CD8-positive, alpha-beta T cell (primary cell): ENCODE measurements at regions of chr17 and their contacts with region 1.

Region 1: GRCh38 chr17:6913608-6914443 is 82.0 kb upstream of the ALOX12 start:
- DNase-seq: peak; percentile 65 to 85 (median 81)
- ATAC-seq: peak; percentile 91
- H3K4me3 ChIP-seq: peak overlapping the region; percentile 23 to 70
- H3K4me3 Mint-ChIP-seq: peak overlapping the region; percentile 89
- H3K27ac ChIP-seq: no peak overlapping the region
- H3K27ac Mint-ChIP-seq: no peak overlapping the region
- H3K4me1 ChIP-seq: peaks cover 5% of the 10 kb centered on the region
- H3K4me1 Mint-ChIP-seq: peaks cover 18% of the 10 kb centered on the region
- H3K27me3 ChIP-seq: no peaks in the 10 kb centered on the region
- H3K27me3 Mint-ChIP-seq: peaks cover 2% of the 10 kb centered on the region
- CTCF ChIP-seq: peak; percentile 91

Region 2: DNA sequence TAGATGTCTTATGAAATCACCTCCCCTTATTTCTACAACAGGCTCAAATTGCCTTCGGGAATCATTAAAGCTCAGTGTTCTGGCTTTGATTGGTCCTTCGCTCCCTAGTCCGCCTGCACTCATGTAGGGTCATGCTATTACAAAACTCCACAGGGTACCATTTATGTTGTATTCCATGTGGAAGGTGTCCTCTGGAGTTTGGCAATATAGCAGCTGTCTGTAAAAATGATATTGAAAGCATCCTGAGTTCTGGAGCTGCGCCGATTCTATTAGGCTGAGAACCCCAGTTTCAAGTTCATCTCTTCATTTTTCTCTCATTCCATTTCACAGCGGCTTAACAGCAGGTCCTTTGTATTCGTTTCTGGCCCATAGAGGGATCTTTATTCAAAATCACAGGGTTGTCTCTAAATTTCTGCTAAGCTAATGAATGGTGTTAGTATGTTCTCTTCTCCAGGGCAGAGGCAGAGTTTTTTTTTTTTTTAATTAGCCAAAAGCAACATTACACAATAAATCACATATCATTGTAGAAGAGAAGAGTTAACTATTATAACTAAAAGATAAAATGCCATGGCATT is 10.4 kb before region 1 on chr17:
- CTCF ChIA-PET with region 1: interaction called, 14 read pairs
- POLR2A ChIA-PET with region 1: no interaction called
- intact Hi-C with region 1: no loop called
- DNase-seq: no peak
- ATAC-seq: no peak
- H3K4me3 ChIP-seq: no peak overlapping the region
- H3K4me3 Mint-ChIP-seq: no peak overlapping the region
- H3K27ac ChIP-seq: no peak overlapping the region
- H3K27ac Mint-ChIP-seq: no peak overlapping the region
- H3K4me1 ChIP-seq: no peaks in the 10 kb centered on the region
- H3K4me1 Mint-ChIP-seq: no peaks in the 10 kb centered on the region
- H3K27me3 ChIP-seq: no peaks in the 10 kb centered on the region
- H3K27me3 Mint-ChIP-seq: peaks cover 2% of the 10 kb centered on the region
- CTCF ChIP-seq: no peak

Region 3: DNA sequence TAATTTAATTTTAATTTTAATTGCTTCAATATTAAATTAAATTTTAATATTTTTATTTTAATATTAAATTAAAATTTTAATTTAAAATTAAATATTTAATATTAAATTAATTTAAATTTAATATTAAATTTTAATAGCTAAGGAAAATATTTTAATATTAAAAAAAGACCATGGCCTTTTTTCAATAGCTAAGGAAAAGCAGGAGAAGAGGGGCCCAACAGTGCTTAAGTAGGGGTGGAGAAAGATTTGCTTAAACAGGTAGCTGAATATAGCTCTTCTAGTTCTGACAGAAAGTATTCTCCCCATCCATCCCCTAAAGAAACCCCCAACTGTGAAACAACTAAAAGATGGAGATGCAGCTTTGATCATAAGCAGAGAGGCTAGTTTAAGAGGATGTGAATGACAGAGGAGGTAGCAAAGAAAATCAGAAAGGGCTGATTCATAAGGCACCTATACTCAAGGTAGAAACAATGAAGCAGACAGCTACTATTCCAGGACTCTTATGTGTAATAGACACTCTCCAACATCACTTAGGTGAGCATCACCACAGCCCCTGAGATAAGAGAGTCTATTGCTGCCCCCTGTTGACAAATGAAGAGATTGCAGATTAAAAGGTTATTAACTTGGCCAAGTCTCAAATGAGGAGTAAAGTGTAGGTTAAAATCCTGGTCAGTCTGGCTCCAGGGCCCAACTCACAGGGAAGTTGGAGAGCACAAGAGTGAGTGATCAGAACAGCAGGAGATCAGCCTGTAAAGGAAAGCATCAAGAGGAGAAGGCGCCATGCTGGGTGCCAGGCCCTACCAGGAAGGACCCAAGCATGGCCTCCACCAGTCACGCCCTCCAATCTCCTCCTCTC is 90.8 kb after region 1 on chr17:
- CTCF ChIA-PET with region 1: interaction called, 170 read pairs
- POLR2A ChIA-PET with region 1: interaction called, 14 read pairs
- intact Hi-C with region 1: loop called (anchors 1 kb)
- DNase-seq: peak in 3 of 9 experiments; percentile 47 to 85 (median 77)
- ATAC-seq: peak; percentile 98
- H3K4me3 ChIP-seq: no peak overlapping the region
- H3K4me3 Mint-ChIP-seq: no peak overlapping the region
- H3K27ac ChIP-seq: no peak overlapping the region
- H3K27ac Mint-ChIP-seq: no peak overlapping the region
- H3K4me1 ChIP-seq: no peaks in the 10 kb centered on the region
- H3K4me1 Mint-ChIP-seq: peaks cover 23% of the 10 kb centered on the region
- H3K27me3 ChIP-seq: no peaks in the 10 kb centered on the region
- H3K27me3 Mint-ChIP-seq: no peaks in the 10 kb centered on the region
- CTCF ChIP-seq: peak; percentile 78

Region 4: GRCh38 chr17:7021993-7022778 is 108.4 kb after region 1 on chr17:
- CTCF ChIA-PET with region 1: interaction called, 106 read pairs
- POLR2A ChIA-PET with region 1: interaction called, 3 read pairs
- intact Hi-C with region 1: loop called (anchors 1 kb)
- DNase-seq: peak; percentile 58 to 88 (median 76)
- ATAC-seq: peak; percentile 61
- H3K4me3 ChIP-seq: peak overlapping the region; percentile 17 to 41
- H3K4me3 Mint-ChIP-seq: peak overlapping the region; percentile 74
- H3K27ac ChIP-seq: peak overlapping the region in 1 of 2 experiments; percentile 46
- H3K27ac Mint-ChIP-seq: peak overlapping the region; percentile 37
- H3K4me1 ChIP-seq: peaks cover 42% of the 10 kb centered on the region
- H3K4me1 Mint-ChIP-seq: peaks cover 46% of the 10 kb centered on the region
- H3K27me3 ChIP-seq: no peaks in the 10 kb centered on the region
- H3K27me3 Mint-ChIP-seq: peaks cover 3% of the 10 kb centered on the region
- CTCF ChIP-seq: peak; percentile 98

Region 5: DNA sequence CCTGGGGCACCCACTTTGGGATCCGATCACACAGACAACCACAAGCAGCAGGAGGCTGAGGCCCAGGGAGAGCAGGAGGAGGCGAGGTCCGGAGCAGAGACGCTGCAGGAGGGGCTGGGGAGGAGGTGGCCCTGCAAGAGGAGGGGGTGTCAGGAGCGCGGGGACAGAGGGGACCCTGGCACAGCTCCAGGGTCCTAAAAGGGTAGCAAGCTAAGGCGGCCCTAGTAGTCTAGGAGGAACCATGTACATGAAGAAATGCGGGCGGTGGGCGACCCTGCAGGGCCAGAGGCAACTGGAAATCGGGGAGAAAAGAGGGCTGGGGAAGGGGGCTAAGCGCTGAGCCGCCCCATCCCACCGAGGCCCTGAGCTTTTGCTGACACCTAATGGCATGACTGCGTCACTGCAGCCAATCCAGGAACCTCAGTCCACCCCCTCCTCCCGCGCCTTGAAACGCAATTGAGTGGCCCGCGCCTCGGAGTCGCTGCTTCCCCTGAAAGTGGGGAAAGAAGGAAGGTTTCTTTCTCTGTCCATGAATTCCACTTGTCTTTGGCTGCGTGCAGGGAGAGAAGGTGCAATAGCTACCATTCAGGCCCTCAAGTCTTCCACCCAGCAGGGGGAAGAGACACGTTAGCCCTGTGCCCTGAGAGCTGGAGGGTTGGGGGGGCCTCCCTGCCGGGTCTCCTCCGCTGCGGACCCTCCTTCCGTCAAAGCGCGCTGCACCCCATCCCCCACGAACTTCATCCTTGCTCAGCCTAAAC is 263.5 kb after region 1 on chr17:
- CTCF ChIA-PET with region 1: interaction called, 4 read pairs
- POLR2A ChIA-PET with region 1: no interaction called
- intact Hi-C with region 1: loop called (anchors 5 kb)
- DNase-seq: peak; percentile 38 to 80 (median 64)
- ATAC-seq: peak; percentile 91
- H3K4me3 ChIP-seq: peak overlapping the region; percentile 24 to 36
- H3K4me3 Mint-ChIP-seq: peak overlapping the region; percentile 76
- H3K27ac ChIP-seq: no peak overlapping the region
- H3K27ac Mint-ChIP-seq: no peak overlapping the region
- H3K4me1 ChIP-seq: peaks cover 26% of the 10 kb centered on the region
- H3K4me1 Mint-ChIP-seq: no peaks in the 10 kb centered on the region
- H3K27me3 ChIP-seq: peaks cover 0 to 44% of the 10 kb centered on the region in 2 experiments
- H3K27me3 Mint-ChIP-seq: no peaks in the 10 kb centered on the region
- CTCF ChIP-seq: peak; percentile 72